ENCODE measurements at regions of chr17 and their contacts with region 1.

Region 1: GRCh38 chr17:7687908-7688807 is at the start of gene WRAP53:
- DNase-seq: peak; percentile 91
- ATAC-seq: peak; percentile 77
- H3K4me3 Mint-ChIP-seq: peak within 1 kb of the TSS; percentile 97
- H3K27ac Mint-ChIP-seq: peak within 1 kb of the TSS; percentile 99
- H3K4me1 Mint-ChIP-seq: peaks cover 49% of the 10 kb centered on the region
- H3K27me3 Mint-ChIP-seq: no peaks in the 10 kb centered on the region
- CTCF ChIP-seq: peak; percentile 94
- total RNA-seq, gene WRAP53: 17.1 and 17.6 TPM in 2 replicates

Region 2: GRCh38 chr17:7314719-7315569 is 373.2 kb before region 1 on chr17 and contains the start of gene GPS2:
- CTCF ChIA-PET with region 1: no interaction called
- POLR2A ChIA-PET with region 1: interaction called, 11 read pairs
- intact Hi-C with region 1: no loop called
- DNase-seq: peak; percentile 95
- ATAC-seq: peak; percentile 82
- H3K4me3 Mint-ChIP-seq: peak within 1 kb of the TSS; percentile 89
- H3K27ac Mint-ChIP-seq: peak within 1 kb of the TSS; percentile 87
- H3K4me1 Mint-ChIP-seq: peaks cover 54% of the 10 kb centered on the region
- H3K27me3 Mint-ChIP-seq: no peaks in the 10 kb centered on the region
- CTCF ChIP-seq: no peak
- total RNA-seq, gene GPS2: 105 and 115 TPM in 2 replicates

Region 3: DNA sequence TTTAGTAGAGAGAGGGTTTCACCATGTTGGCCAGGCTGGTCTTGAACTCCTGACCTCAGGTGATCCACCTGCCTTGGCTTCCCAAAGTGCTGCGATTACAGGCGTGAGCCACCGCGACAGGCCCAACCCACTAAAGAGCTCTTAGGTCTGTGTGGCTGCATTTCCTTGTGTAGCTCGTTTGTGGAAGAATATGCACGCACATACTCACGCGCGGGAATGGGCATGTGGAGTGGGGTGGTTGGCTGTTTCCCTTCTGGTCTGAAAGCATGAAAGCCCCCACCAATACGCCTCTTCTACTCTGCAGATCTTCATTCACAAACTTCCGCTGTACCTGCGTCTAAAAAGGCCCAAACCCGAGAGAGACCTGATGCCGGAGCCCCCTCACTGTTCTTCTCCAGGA is 233.2 kb before region 1 on chr17:
- CTCF ChIA-PET with region 1: no interaction called
- POLR2A ChIA-PET with region 1: interaction called, 4 read pairs
- intact Hi-C with region 1: loop called (anchors 1 kb)
- DNase-seq: no peak
- ATAC-seq: no peak
- H3K4me3 Mint-ChIP-seq: peak overlapping the region; percentile 94
- H3K27ac Mint-ChIP-seq: peak overlapping the region; percentile 88
- H3K4me1 Mint-ChIP-seq: peaks cover 12% of the 10 kb centered on the region
- H3K27me3 Mint-ChIP-seq: peaks cover 4% of the 10 kb centered on the region
- CTCF ChIP-seq: no peak

Region 4: GRCh38 chr17:7583253-7584109 is 104.7 kb before region 1 on chr17 and contains the start of gene MPDU1:
- CTCF ChIA-PET with region 1: interaction called, 3 read pairs
- POLR2A ChIA-PET with region 1: interaction called, 94 read pairs
- intact Hi-C with region 1: loop called (anchors 1 kb)
- DNase-seq: peak; percentile 90
- ATAC-seq: peak; percentile 76
- H3K4me3 Mint-ChIP-seq: peak within 1 kb of the TSS; percentile 100
- H3K27ac Mint-ChIP-seq: peak within 1 kb of the TSS; percentile 100
- H3K4me1 Mint-ChIP-seq: peaks cover 64% of the 10 kb centered on the region
- H3K27me3 Mint-ChIP-seq: no peaks in the 10 kb centered on the region
- CTCF ChIP-seq: no peak
- total RNA-seq, gene MPDU1: 50.7 and 58.9 TPM in 2 replicates

Region 5: DNA sequence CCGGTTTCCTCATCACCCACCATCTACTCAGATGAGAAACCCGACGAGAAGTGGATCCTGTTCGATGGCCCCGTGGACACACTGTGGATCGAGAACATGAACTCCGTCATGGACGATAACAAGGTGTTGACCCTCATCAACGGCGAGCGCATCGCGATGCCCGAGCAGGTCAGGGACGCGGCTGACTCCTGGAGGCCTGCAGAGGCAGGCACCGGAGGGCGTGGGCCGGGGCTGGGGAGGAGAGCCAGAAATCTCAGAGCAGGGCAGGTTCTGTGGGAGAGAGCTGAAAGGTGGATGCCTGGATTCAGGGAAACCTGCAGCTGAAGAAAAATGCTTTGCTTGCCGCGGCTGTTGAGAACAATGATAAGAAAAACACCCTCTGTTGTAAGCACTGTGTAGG is 98.7 kb after region 1 on chr17:
- CTCF ChIA-PET with region 1: no interaction called
- POLR2A ChIA-PET with region 1: no interaction called
- intact Hi-C with region 1: no loop called
- DNase-seq: no peak
- ATAC-seq: no peak
- H3K4me3 Mint-ChIP-seq: no peak overlapping the region
- H3K27ac Mint-ChIP-seq: no peak overlapping the region
- H3K4me1 Mint-ChIP-seq: no peaks in the 10 kb centered on the region
- H3K27me3 Mint-ChIP-seq: peaks cover 9% of the 10 kb centered on the region
- CTCF ChIP-seq: no peak

Region 6: DNA sequence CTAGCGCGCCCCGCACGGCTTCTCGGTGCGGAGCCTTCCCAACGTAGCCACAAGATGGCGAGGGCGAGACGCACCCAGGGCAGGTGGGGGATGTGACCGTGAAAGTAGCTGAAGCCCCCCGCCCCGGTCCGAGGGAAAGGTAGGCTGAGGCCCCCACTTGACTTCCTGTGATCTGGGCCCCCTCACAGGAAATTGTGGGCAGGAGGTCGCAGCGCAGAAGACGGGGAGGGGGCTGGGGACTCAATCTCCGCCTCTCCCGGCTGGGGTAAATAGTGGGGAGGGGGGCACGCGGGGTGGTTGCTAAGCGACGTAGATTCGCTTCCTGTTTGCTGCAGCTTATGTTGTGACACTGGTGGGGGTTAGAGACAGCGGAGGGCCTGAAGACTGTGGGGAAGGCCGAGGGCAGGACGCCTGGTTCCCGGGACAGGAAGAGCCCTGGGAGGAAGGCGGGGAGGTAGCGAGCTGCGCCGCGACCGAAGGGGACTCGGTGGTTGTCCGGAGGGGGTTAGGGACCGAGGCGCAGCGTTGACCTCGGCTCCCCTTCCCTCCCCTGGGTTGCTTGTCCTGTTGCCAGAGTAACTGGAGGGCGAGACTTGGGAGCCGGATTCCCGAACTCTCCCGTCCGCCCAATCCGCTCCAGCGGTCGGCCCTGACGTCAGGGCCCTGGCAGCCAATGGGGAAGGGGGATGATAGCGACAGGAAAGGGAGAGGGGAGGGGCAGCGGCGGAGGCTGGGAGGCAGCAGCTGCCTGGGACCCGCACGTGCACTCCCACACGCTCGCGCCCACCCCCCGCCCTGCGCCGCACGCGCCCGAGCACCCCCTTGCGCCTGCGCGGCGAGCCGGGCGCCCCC is 147.0 kb after region 1 on chr17:
- CTCF ChIA-PET with region 1: no interaction called
- POLR2A ChIA-PET with region 1: interaction called, 43 read pairs
- intact Hi-C with region 1: loop called (anchors 2 kb)
- DNase-seq: peak; percentile 79
- ATAC-seq: peak; percentile 47
- H3K4me3 Mint-ChIP-seq: peak overlapping the region; percentile 97
- H3K27ac Mint-ChIP-seq: peak overlapping the region; percentile 94
- H3K4me1 Mint-ChIP-seq: peaks cover 53% of the 10 kb centered on the region
- H3K27me3 Mint-ChIP-seq: peaks cover 14% of the 10 kb centered on the region
- CTCF ChIP-seq: no peak

Region 7: GRCh38 chr17:8156246-8156992 is 468.3 kb after region 1 on chr17:
- CTCF ChIA-PET with region 1: no interaction called
- POLR2A ChIA-PET with region 1: interaction called, 13 read pairs
- intact Hi-C with region 1: loop called (anchors 10 kb)
- DNase-seq: peak; percentile 98
- ATAC-seq: peak; percentile 82
- H3K4me3 Mint-ChIP-seq: no peak overlapping the region
- H3K27ac Mint-ChIP-seq: no peak overlapping the region
- H3K4me1 Mint-ChIP-seq: peaks cover 48% of the 10 kb centered on the region
- H3K27me3 Mint-ChIP-seq: no peaks in the 10 kb centered on the region
- CTCF ChIP-seq: no peak